ENCODE measurements at regions of chr2 and their contacts with region 1.

Region 1: GRCh38 chr2:203238704-203239526 is at the start of gene CYP20A1:
- DNase-seq: peak; percentile 96
- H3K4me3 Mint-ChIP-seq: peak within 1 kb of the TSS; percentile 91
- H3K27ac Mint-ChIP-seq: peak within 1 kb of the TSS; percentile 100
- H3K4me1 Mint-ChIP-seq: peaks cover 18% of the 10 kb centered on the region
- H3K27me3 Mint-ChIP-seq: no peaks in the 10 kb centered on the region
- total RNA-seq, gene CYP20A1: 21.0 and 23.2 TPM in 2 replicates

Region 2: DNA sequence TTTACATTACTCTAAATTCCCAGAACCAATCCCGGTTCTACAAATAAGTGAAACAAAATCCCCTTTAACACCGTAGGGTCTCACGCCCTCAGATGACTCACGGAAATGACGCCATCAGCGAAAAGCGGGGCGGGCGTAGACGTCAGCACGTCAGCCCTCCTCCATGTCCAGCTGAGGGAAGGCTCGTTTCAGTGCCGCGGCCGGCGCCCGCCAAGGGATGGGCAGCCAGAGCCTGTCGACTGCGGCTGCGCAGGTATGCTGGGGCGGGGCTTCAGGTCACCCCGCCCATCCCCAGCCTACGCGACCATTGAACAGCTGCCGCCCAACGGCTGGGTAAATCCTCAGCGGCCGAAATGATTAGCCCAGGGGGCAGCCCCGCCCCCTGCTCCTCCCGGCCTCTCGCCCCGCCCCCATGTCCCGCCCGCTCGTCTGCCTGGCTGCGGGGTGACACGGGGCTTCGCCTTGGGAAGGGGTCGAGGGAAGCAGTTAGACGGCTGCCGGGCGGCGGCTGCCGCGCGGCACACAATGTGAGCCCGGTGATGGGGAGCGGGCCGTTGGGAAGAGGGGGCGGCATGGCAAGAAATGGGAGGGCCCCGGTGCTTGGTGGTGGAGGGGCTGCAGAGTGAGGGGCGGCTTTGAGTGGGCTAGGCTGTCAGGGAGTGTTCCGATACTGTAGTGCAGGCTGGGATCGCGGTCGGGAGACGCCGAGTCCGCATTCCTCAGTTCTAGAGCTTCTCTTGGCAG is 224.3 kb before region 1 on chr2 and contains the start of gene NBEAL1:
- intact Hi-C with region 1: loop called (anchors 1 kb)
- DNase-seq: peak; percentile 96
- H3K4me3 Mint-ChIP-seq: peak within 1 kb of the TSS; percentile 98
- H3K27ac Mint-ChIP-seq: peak within 1 kb of the TSS; percentile 92
- H3K4me1 Mint-ChIP-seq: peaks cover 28% of the 10 kb centered on the region
- H3K27me3 Mint-ChIP-seq: peaks cover 16% of the 10 kb centered on the region
- total RNA-seq, gene NBEAL1: 10.6 and 12.2 TPM in 2 replicates

Region 3: GRCh38 chr2:203177361-203177760 is 61.6 kb before region 1 on chr2:
- intact Hi-C with region 1: no loop called
- DNase-seq: no peak
- H3K4me3 Mint-ChIP-seq: no peak overlapping the region
- H3K27ac Mint-ChIP-seq: no peak overlapping the region
- H3K4me1 Mint-ChIP-seq: peaks cover 5% of the 10 kb centered on the region
- H3K27me3 Mint-ChIP-seq: no peaks in the 10 kb centered on the region

Region 4: GRCh38 chr2:203327901-203328759 is 89.2 kb after region 1 on chr2 and contains the start of gene ABI2:
- intact Hi-C with region 1: loop called (anchors 2 kb)
- DNase-seq: peak; percentile 50
- H3K4me3 Mint-ChIP-seq: peak within 1 kb of the TSS; percentile 89
- H3K27ac Mint-ChIP-seq: peak within 1 kb of the TSS; percentile 80
- H3K4me1 Mint-ChIP-seq: peaks cover 25% of the 10 kb centered on the region
- H3K27me3 Mint-ChIP-seq: peaks cover 1% of the 10 kb centered on the region
- total RNA-seq, gene ABI2: 36.2 and 36.6 TPM in 2 replicates

Measured in activated T-helper 2 cell treated with anti-CD3 and anti-CD28 coated beads, Interferon-gamma antibody, Interleukin-2, Interleukin-4, amounts not matched to agents 10 μg/mL and 5 μg/mL and 100 μg/mL, durations not matched to agents 14 hours and 24 hours and 36 hours (primary cell).